Left ventricle myocardium superior (tissue), 1 donor: ENCODE measurements at regions of chr4 and their contacts with region 1.

Region 1: DNA sequence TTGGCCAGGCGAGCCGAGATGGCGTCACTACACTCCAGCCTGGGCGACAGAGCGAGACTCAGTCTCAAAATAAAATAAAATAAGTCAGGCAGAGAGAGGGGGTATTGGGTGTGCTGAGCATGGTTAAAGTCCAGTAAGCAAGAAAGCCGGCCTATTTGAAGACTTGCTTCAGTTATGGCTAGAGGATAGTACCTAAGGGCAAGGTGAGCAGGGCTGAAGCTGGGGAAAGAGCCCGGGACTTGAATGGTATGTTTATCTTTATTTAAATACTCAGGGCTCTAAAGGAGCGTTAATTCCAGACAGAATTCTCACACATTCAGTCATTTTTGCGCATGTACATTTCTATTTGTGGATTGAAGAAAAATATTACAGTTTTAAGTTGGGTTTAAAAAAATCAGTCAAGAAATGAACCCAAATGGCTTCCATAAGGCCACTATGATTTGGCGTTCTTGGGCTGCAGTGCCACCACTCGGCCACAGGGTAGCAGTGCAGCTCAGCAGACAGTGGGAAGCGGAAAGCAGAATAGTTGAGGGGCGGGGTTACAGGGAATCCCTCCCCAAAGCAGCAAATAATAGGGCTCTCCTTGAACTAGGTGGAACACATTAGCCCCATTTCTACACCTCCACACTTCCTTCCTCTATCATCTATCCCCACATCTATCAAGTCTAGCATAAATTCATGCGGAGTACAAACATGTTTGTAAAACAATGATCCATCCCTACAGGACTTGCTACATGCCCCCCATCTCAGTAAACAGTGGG is 37.2 kb upstream of the SH3D19 start:
- DNase-seq: peak; percentile 85
- ATAC-seq: peak; percentile 95

Region 2: DNA sequence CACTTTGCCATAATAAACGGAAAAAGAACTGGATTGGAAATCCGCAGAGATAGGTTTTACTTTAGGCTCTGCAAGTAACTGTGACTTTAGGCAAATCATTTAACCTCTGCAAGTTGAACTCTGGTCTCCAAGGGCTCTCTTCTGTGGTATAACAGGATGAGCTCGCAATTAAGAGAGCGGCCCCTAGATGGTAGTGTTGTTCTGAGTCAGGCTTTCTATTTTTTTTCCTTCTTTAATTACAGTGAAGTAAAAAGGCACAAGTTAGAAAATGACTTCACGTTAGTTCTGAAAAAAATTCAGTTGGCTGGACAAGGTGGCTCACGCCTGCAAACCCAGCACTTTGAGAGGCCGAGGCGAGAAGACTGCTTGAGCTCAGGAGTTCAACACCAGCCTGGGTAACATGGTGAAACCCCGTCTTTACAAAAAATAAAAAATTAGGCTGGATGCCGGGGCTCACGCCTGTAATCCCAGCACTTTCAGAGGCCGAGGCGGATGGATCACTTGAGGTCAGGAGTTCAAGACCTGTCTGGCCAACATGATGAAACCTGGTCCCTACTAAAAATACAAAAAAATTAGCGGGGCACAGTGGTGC is 245.1 kb before region 1 on chr4:
- intact Hi-C with region 1: loop called (anchors 5 kb)
- DNase-seq: no peak
- ATAC-seq: peak; percentile 52

Region 3: GRCh38 chr4:151276787-151277562 is 85.6 kb before region 1 on chr4 and contains the start of gene PRSS48:
- intact Hi-C with region 1: loop called (anchors 5 kb)
- DNase-seq: peak; percentile 81
- ATAC-seq: peak; percentile 83
- total RNA-seq, gene PRSS48: not detected